CD4-positive, alpha-beta memory T cell (primary cell): ENCODE measurements at regions of chr1 and their contacts with region 1.

Region 1: DNA sequence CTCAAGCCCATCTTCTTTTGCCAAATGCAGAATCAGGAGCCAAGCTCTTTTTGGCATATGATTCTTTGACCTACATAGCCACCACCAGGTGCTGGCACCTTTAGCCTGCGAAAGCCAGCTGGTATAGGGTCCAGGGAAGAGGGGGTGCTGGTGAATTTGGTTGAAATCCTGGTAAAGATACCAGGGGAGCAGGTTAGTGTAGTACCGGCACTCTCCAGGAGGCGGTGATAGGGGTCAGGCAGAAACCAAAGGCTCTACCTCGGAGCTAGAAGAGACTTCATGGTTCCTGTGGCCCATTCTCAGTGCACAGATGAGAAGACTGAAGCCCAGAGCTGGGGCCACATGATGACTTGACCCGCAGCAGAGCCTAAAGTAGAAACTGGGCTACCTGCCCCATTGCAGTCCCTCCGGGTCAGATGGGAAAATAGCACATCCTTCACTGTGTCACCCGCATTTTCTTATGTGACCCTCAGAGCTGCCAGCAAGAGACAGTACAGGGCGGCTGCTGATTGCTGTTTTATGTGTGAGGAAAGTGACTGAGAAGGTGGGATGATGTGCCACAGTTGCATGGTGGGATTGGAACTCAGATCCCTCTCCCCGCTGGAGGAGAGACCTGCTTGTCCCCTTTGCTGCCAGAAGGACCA is 36.0 kb upstream of the IL19 start:
- DNase-seq: peak; percentile 64 to 82 (median 71)
- H3K4me3 ChIP-seq: no peak overlapping the region
- H3K4me3 Mint-ChIP-seq: peak overlapping the region in 3 of 8 donors; percentile 23 to 76 (median 54)
- H3K27ac ChIP-seq: peak overlapping the region; percentile 53
- H3K27ac Mint-ChIP-seq: peak overlapping the region; percentile 92 to 97 (median 94)
- H3K4me1 ChIP-seq: peaks cover 56% of the 10 kb centered on the region
- H3K4me1 Mint-ChIP-seq: peaks cover 47 to 56% (median 52%) of the 10 kb centered on the region in 4 donors
- H3K27me3 ChIP-seq: no peaks in the 10 kb centered on the region
- H3K27me3 Mint-ChIP-seq: no peaks in the 10 kb centered on the region

Region 2: GRCh38 chr1:206744683-206745082 is 10.1 kb after region 1 on chr1:
- CTCF ChIA-PET with region 1: interaction called, 21 read pairs
- POLR2A ChIA-PET with region 1: interaction called, 4 read pairs
- intact Hi-C with region 1: no loop called
- DNase-seq: peak in 1 of 5 donors; percentile 44
- H3K4me3 ChIP-seq: no peak overlapping the region
- H3K4me3 Mint-ChIP-seq: peak overlapping the region in 3 of 8 donors; percentile 31 to 60 (median 39)
- H3K27ac ChIP-seq: no peak overlapping the region
- H3K27ac Mint-ChIP-seq: peak overlapping the region in 5 of 7 donors; percentile 33 to 78 (median 48)
- H3K4me1 ChIP-seq: peaks cover 25% of the 10 kb centered on the region
- H3K4me1 Mint-ChIP-seq: peaks cover 20 to 64% (median 33%) of the 10 kb centered on the region in 4 donors
- H3K27me3 ChIP-seq: no peaks in the 10 kb centered on the region
- H3K27me3 Mint-ChIP-seq: no peaks in the 10 kb centered on the region

Region 3: DNA sequence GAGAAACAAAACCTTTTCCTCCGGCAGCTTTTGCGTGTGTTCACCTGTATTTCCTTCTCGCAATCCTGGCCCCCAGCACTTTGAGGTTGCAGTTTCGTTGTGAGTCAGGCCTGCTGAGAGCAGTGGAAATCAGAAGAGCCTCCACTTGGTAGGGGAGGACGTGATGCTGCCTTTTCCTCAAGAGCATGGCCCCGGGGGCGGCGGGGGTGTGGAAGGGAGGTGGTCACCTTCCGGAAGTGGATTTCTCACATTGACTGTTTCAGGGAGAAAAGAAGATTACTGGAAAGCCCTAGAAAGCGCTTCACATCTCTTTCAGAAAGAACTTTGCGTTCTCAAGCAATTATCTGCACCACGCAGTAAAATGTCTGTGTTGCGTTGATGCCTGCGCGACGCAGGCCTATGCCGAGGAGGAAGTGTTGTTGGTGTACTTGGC is 49.9 kb after region 1 on chr1:
- CTCF ChIA-PET with region 1: interaction called, 20 read pairs
- POLR2A ChIA-PET with region 1: interaction called, 9 read pairs
- intact Hi-C with region 1: no loop called
- DNase-seq: peak; percentile 60 to 83 (median 63)
- H3K4me3 ChIP-seq: peak overlapping the region in 1 of 2 donors; percentile 16
- H3K4me3 Mint-ChIP-seq: peak overlapping the region; percentile 55 to 84 (median 70)
- H3K27ac ChIP-seq: peak overlapping the region; percentile 46
- H3K27ac Mint-ChIP-seq: peak overlapping the region; percentile 83 to 96 (median 93)
- H3K4me1 ChIP-seq: peaks cover 37% of the 10 kb centered on the region
- H3K4me1 Mint-ChIP-seq: peaks cover 37 to 60% (median 49%) of the 10 kb centered on the region in 4 donors
- H3K27me3 ChIP-seq: no peaks in the 10 kb centered on the region
- H3K27me3 Mint-ChIP-seq: no peaks in the 10 kb centered on the region

Region 4: DNA sequence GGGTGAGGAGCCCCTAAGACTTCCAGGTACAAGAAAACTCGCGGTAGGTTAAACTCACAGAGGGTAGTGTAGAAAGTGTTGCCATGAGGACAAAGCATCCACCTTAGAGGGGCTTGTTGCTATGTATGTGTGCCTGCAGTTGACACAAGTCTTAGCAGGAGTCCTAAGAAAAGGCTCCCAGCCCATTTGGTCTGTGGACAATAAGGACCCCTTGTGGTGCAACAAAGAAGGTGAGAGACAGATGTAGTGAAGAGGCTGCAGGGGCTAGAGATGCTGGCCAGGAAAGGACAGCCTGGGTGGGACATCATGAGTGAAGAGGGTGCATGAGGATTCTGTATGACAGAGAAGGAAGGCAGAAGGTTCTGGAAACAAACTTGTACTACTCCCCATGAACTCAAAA is 74.0 kb after region 1 on chr1:
- CTCF ChIA-PET with region 1: interaction called, 351 read pairs
- POLR2A ChIA-PET with region 1: interaction called, 158 read pairs
- intact Hi-C with region 1: loop called (anchors 1 kb)
- DNase-seq: peak; percentile 61 to 68 (median 63)
- H3K4me3 ChIP-seq: no peak overlapping the region
- H3K4me3 Mint-ChIP-seq: no peak overlapping the region
- H3K27ac ChIP-seq: no peak overlapping the region
- H3K27ac Mint-ChIP-seq: peak overlapping the region in 6 of 7 donors; percentile 20 to 90 (median 83)
- H3K4me1 ChIP-seq: peaks cover 35% of the 10 kb centered on the region
- H3K4me1 Mint-ChIP-seq: peaks cover 24 to 56% (median 43%) of the 10 kb centered on the region in 4 donors
- H3K27me3 ChIP-seq: no peaks in the 10 kb centered on the region
- H3K27me3 Mint-ChIP-seq: no peaks in the 10 kb centered on the region

Region 5: GRCh38 chr1:206905280-206906164 is 170.9 kb after region 1 on chr1:
- CTCF ChIA-PET with region 1: interaction called, 37 read pairs
- POLR2A ChIA-PET with region 1: interaction called, 21 read pairs
- intact Hi-C with region 1: no loop called
- DNase-seq: no peak
- H3K4me3 ChIP-seq: no peak overlapping the region
- H3K4me3 Mint-ChIP-seq: peak overlapping the region; percentile 49 to 80 (median 69)
- H3K27ac ChIP-seq: peak overlapping the region; percentile 31
- H3K27ac Mint-ChIP-seq: peak overlapping the region; percentile 67 to 95 (median 85)
- H3K4me1 ChIP-seq: peaks cover 60% of the 10 kb centered on the region
- H3K4me1 Mint-ChIP-seq: peaks cover 45 to 78% (median 60%) of the 10 kb centered on the region in 4 donors
- H3K27me3 ChIP-seq: no peaks in the 10 kb centered on the region
- H3K27me3 Mint-ChIP-seq: no peaks in the 10 kb centered on the region

Region 6: DNA sequence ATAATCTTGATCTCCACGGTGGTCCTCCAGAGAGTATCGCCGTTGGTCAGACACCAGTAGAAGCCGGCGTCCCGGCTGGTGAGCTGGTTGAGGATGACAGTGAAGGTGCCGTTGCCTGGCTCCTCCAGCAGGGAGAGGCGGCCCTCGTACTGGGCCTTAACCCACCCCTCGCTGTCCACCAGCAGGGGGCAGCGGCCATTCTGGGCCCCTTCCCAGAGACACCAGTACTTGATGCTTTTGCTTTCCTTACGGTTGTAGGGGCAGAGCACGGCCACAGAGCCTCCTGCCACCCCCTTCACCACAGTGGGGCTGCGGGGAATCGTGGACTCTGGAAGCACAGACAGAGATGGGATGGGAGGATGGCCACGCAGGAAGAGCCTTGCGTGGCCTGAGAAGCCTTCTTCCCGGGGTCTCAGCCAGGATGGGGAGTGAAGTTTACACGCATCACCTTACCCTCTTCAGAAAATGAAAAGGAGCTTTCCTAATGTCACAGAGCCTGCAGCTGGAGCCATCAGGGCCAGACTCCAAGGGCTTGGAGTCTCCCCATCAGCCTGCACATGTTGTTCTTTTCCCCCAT is 201.0 kb after region 1 on chr1:
- CTCF ChIA-PET with region 1: interaction called, 41 read pairs
- POLR2A ChIA-PET with region 1: interaction called, 3 read pairs
- intact Hi-C with region 1: loop called (anchors 1 kb)
- DNase-seq: peak in 1 of 5 donors; percentile 30
- H3K4me3 ChIP-seq: no peak overlapping the region
- H3K4me3 Mint-ChIP-seq: no peak overlapping the region
- H3K27ac ChIP-seq: no peak overlapping the region
- H3K27ac Mint-ChIP-seq: no peak overlapping the region
- H3K4me1 ChIP-seq: peaks cover 14% of the 10 kb centered on the region
- H3K4me1 Mint-ChIP-seq: peaks cover 9 to 25% (median 19%) of the 10 kb centered on the region in 4 donors
- H3K27me3 ChIP-seq: no peaks in the 10 kb centered on the region
- H3K27me3 Mint-ChIP-seq: no peaks in the 10 kb centered on the region

Region 7: GRCh38 chr1:207134581-207134980 is 400.0 kb after region 1 on chr1:
- CTCF ChIA-PET with region 1: no interaction called
- POLR2A ChIA-PET with region 1: no interaction called
- intact Hi-C with region 1: no loop called
- DNase-seq: no peak
- H3K4me3 ChIP-seq: no peak overlapping the region
- H3K4me3 Mint-ChIP-seq: no peak overlapping the region
- H3K27ac ChIP-seq: no peak overlapping the region
- H3K27ac Mint-ChIP-seq: no peak overlapping the region
- H3K4me1 ChIP-seq: no peaks in the 10 kb centered on the region
- H3K4me1 Mint-ChIP-seq: no peaks in the 10 kb centered on the region
- H3K27me3 ChIP-seq: no peaks in the 10 kb centered on the region
- H3K27me3 Mint-ChIP-seq: peaks cover 3 to 5% of the 10 kb centered on the region in 2 donors